Posterior vena cava (tissue), 2 donors: ENCODE measurements at regions of chr7 and their contacts with region 1.

Region 1: GRCh38 chr7:75854233-75854632 is 24.6 kb upstream of the RHBDD2 start:
- DNase-seq: no peak

Region 2: DNA sequence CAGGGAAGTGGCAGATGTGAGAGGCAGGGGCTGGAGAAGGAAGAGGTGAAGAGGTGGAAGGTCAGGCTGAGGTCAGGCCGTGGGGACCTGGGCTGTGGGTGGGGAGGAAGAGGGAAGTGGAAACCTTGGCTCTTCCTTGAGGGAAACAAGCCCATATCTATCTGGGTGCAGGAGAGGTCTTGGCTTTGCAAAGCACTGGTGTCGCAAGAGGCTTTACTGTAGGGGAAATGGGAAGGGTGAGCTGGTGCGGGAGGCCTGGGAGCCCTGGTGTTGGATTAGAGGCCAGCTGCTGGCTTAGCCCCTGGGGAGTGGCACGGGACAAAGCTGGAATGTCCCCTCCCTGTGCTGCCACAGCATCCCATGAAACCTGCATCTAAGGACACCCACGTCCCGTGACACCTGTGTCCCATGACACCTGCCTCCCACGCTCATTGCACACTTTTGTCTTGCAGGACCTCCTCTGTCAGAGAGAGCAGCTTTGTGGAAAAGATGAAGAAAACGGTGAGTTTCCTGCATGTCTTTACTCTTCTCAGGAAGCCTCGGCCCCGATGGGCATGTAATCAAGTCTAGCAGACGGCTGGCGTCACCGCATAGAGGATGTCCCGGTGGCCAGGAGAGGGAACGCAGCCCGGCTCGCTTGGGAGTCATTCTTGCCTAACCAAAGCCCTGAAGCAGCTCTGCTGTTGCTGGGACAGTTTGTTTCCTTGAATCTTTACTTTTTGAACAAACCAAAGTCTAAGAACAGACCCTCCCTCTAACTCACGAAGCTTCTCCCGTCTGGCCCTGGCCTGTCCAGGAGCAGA is 117.9 kb after region 1 on chr7:
- intact Hi-C with region 1: no loop called
- DNase-seq: peak; percentile 95

Region 3: DNA sequence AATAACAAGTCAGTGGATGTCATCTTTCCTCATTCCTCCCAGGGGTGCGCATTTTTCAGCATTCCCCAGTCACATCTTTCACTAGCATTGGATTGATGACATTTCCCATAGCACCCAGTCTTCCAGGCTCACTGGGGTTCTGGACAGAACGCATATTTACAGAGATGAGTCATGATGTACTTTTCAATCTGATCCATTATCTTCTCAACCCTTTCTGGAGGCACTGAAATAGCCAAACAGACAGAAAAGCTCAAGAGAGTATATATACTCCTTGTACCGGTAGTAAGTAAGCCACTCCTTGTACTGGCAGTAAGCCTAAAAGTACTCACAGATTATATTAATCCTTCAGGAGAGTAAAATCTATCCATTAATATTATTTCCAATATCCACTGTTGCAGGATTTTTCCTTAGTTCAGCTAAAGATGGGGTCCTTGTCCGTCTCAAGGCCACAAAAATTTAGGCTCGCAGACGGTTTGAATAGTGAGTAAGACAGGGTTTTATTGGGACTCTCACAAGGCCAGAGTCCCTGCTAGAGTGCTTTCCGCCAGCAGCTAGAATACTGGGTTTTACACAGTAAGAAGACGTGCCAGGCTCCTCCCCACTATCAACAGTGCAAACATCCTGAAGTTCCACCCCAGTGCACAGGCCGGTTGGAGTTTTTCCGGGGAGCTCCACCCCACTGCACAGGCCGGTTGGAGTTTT is 254.5 kb after region 1 on chr7:
- intact Hi-C with region 1: loop called in 1 of 2 experiments (anchors 10 kb)
- DNase-seq: no peak